OCI-LY7 (cell line): ENCODE measurements at regions of chr10 and their contacts with region 1.

Region 1: DNA sequence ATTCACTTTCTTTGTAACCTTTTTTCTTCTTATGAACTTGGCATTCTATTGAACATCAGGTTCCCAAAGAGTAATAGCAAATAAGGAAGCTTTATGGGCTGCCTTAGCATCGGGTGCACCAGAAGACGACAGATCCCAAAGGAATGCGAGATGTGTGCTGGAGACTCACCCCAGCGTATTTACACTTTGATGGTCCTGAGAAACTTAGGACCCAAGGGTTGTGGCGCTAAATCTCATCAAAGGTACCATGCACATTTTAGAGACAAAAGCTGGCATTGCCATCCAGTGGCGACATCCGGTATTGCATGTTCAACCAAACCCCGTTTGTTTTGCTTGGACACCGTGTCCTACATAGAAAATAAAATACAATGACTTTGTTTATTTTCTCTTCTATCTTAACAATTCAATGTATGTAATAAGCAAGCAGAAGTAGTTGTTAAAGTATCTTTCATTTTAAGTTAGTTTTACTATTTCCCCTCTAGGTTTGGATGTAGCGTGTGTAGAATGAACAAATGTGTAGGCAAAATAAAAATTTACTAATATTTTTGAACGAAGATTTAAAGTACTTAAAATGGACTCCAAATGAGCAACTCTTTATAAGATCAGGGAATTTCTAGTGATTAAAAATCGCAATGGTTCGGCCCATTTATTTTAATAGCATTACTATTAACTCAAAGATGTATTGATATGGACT is 1154.8 kb downstream of the GATA3 start:
- DNase-seq: peak; percentile 60
- H3K4me3 ChIP-seq: no peak overlapping the region
- H3K27ac ChIP-seq: no peak overlapping the region
- H3K4me1 ChIP-seq: no peaks in the 10 kb centered on the region
- CTCF ChIP-seq: peak; percentile 93

Region 2: DNA sequence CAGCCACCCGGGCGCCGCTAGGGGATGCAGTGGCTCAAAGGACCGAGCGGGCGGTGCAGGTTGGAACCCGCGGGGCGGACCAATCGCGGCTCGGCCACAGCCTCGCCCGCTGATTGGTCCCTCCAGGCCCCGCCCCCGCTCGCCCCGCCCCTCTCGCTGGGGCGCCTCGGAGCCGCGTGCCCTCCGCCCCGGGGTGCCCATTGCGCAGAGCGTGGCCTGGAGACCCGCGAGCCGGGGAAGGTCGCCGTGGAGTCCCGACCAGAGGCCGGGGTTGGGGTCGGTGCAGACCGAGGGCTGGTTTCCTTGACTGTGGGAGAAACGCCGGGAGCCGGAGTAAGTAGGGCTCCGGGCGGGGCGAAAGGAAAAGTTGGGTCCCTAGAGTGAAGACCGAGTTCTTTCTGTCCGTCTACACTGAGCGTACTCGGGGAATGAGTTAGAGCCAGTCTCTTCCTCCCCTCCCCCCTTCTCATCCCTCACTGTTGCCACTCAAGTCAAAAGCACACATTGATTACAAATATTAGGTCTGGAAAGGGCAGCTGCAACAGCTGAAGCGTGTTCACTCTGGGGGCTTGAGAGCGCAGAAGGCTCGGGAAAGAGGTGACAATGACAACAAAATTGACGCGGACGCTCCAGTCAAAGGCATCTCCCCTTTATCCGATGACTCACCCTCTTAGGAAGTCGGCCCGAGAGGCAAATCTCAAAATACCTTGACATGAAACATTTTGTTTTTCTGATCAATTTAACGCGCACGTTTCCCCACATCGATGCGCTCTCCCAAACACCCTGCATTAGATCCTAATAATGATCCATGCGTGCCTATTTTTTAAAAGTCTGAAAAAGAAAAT is 1155.6 kb before region 1 on chr10:
- CTCF ChIA-PET with region 1: no interaction called
- POLR2A ChIA-PET with region 1: no interaction called
- intact Hi-C with region 1: loop called (anchors 10 kb)
- DNase-seq: peak; percentile 85
- H3K4me3 ChIP-seq: peak overlapping the region; percentile 51
- H3K27ac ChIP-seq: no peak overlapping the region
- H3K4me1 ChIP-seq: no peaks in the 10 kb centered on the region
- CTCF ChIP-seq: peak; percentile 11

Region 3: DNA sequence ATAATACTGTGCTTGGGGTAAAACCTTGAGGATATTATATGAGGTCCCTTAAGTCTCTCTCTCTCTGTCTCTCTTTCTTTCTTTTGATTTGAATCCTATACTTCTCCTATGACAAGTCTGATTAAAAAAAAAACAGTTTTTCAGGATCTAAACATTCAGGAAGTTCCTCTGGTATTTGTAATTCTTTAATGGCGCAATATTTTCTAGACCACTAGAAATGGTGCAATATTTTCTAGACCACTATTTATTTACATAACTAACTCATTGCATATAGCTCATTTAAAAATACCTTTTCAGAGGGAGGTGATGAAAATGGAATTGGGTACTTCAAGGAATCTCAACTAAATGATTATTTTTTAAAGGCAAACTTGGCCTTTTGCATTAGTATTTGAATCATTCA is 80.6 kb after region 1 on chr10:
- CTCF ChIA-PET with region 1: no interaction called
- POLR2A ChIA-PET with region 1: no interaction called
- intact Hi-C with region 1: no loop called
- DNase-seq: no peak
- H3K4me3 ChIP-seq: no peak overlapping the region
- H3K27ac ChIP-seq: no peak overlapping the region
- H3K4me1 ChIP-seq: peaks cover 10% of the 10 kb centered on the region
- CTCF ChIP-seq: no peak